Panc1 (cell line): ENCODE measurements at regions of chr2 and their contacts with region 1.

Region 1: GRCh38 chr2:85015653-85016360 is 44.8 kb downstream of the KCMF1 start:
- DNase-seq: no peak
- ATAC-seq: no peak
- H3K4me3 ChIP-seq: no peak overlapping the region
- H3K27ac ChIP-seq: no peak overlapping the region; the same call in 1 of the 2 replicates
- H3K4me1 ChIP-seq: peaks cover 52% of the 10 kb centered on the region
- H3K27me3 ChIP-seq: no peaks in the 10 kb centered on the region
- CTCF ChIP-seq: no peak; the same call in 1 of the 2 replicates

Region 2: DNA sequence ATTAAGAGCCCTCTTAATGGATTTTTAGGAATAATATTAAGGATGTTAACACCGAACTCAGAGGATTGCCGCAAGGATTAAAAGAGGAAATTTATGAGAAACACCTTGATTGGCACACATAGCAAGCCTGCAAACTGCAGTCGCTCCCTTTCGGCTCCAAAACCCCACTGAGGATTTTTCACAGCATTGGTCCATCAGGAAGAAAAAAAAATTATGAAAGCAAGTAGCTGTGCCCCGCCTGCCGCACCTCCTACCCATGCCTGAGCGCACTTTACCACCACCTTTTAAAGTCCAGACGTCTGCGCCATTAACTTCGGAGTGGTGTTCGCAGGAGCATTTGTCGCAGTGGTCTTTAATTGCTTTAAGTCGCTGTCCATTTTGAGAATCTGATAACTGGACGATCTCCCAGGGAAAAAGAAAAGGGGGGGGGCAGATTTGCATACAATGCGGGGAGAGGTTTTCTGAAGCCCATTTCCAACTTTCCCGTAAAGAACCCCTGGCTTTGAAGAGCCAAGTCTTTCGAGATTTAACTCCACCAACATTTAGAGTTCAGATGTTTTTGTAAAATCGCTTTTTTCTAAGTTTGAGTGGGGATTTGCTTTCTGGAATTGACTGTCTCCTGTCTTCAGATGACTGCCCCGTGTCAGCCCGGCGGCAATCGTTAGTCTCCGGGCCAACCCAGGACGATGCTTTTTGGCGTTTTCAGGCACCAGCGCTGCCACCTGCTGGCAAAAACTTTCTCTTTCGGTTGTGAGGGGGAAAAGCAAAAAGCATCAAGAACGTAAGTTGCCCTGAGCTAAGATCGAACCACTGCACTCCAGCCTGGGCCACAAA is 134.0 kb before region 1 on chr2:
- CTCF ChIA-PET with region 1: interaction called, 11 read pairs
- POLR2A ChIA-PET with region 1: no interaction called
- in situ Hi-C with region 1: no loop called
- intact Hi-C with region 1: no loop called
- DNase-seq: peak; percentile 80
- ATAC-seq: peak; percentile 89
- H3K4me3 ChIP-seq: peak overlapping the region; percentile 46 to 78
- H3K27ac ChIP-seq: no peak overlapping the region
- H3K4me1 ChIP-seq: peaks cover 12% of the 10 kb centered on the region
- H3K27me3 ChIP-seq: peaks cover 21% of the 10 kb centered on the region
- CTCF ChIP-seq: peak; percentile 91

Region 3: DNA sequence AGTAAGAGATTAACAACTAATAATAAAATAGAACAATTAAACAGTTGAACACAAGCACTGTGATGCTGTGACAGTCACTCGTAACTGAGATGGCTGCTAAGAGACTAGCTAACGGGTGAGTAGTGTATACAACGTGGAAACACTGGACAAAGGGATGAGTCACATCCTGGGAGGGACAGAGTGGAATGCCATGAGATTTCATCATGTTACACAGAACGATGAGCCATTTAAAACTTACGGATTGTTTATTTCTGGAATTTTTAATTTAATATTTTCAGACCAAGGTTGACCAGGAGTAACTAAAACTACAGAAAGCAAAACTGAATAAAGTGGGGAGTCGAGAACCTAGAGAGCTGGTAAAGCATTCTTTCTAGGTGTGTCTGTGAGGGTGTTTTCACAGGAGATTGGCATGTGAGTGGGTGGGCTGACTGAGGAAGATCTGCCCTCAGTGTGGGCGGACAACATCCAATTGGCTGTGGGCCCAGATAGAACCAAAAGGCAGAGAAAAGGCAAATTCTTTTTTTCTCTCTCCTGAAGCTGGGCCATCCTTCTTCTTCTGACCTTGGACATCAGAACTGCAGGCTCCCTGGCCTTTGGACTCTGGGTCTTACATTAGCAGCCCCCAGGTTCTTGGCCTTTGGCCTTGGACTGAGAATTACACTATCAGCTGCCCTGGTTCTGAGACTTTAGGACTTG is 95.8 kb before region 1 on chr2:
- CTCF ChIA-PET with region 1: interaction called, 12 read pairs
- POLR2A ChIA-PET with region 1: no interaction called
- in situ Hi-C with region 1: no loop called
- intact Hi-C with region 1: no loop called
- DNase-seq: peak; percentile 92
- ATAC-seq: peak; percentile 97
- H3K4me3 ChIP-seq: peak overlapping the region in 1 of 2 experiments; percentile 14; a peak in 2 of 4 replicates
- H3K27ac ChIP-seq: peak overlapping the region; percentile 77
- H3K4me1 ChIP-seq: peaks cover 22% of the 10 kb centered on the region
- H3K27me3 ChIP-seq: no peaks in the 10 kb centered on the region
- CTCF ChIP-seq: no peak